ENCODE measurements at regions of chr2 and their contacts with region 1.

Region 1: GRCh38 chr2:20617892-20618467 is 32.9 kb downstream of the HS1BP3 start:
- DNase-seq: peak; percentile 99
- H3K4me3 Mint-ChIP-seq: peak overlapping the region; percentile 31
- H3K27ac Mint-ChIP-seq: peak overlapping the region; percentile 78
- H3K4me1 Mint-ChIP-seq: peaks cover 33% of the 10 kb centered on the region
- H3K27me3 Mint-ChIP-seq: no peaks in the 10 kb centered on the region
- CTCF ChIP-seq: peak; percentile 18

Region 2: DNA sequence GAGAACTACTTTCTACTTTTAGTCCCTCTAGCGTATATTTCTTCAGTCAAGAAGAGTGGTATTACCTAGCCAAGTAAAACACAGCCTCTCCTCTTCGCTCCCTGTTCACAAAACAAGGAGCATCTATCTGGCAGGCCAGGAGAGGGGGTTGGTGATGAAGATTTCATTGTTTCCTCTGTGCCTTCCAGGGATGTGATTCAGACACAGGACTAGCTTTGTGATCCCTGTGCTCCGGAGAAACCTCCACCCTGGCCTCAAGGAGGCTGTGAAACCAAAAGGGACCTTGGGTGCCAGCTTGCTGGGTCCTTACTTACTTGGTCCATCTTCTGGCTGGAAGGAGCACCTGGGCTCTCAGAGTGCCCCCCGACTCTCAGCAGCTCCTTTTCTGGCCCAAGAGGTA is 165.4 kb before region 1 on chr2:
- CTCF ChIA-PET with region 1: interaction called, 3 read pairs
- POLR2A ChIA-PET with region 1: no interaction called
- intact Hi-C with region 1: loop called (anchors 1 kb)
- DNase-seq: peak; percentile 91
- H3K4me3 Mint-ChIP-seq: no peak overlapping the region
- H3K27ac Mint-ChIP-seq: no peak overlapping the region
- H3K4me1 Mint-ChIP-seq: no peaks in the 10 kb centered on the region
- H3K27me3 Mint-ChIP-seq: no peaks in the 10 kb centered on the region
- CTCF ChIP-seq: peak; percentile 52

Region 3: GRCh38 chr2:20490260-20491181 is 127.5 kb before region 1 on chr2:
- CTCF ChIA-PET with region 1: no interaction called
- POLR2A ChIA-PET with region 1: no interaction called
- intact Hi-C with region 1: no loop called
- DNase-seq: peak; percentile 93
- H3K4me3 Mint-ChIP-seq: no peak overlapping the region
- H3K27ac Mint-ChIP-seq: no peak overlapping the region
- H3K4me1 Mint-ChIP-seq: no peaks in the 10 kb centered on the region
- H3K27me3 Mint-ChIP-seq: no peaks in the 10 kb centered on the region
- CTCF ChIP-seq: no peak

Region 4: DNA sequence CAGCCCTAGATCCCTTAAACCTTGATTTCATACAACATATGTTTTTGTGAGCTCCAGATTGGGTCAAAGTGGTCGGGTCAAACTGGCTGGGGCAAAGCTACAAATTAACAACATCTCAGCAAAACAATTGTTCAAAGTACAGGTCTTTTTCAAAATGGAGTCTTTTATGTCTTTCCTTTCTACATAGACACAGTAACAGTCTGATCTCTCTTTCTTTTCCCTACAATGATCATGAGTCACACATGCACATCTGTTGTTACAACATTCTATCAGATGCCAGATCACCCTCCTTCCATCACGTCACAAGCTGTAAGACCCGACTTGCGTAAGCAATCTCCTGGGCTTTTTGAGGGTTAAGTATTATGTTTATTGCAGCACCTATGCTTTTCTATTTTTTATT is 116.0 kb before region 1 on chr2:
- CTCF ChIA-PET with region 1: no interaction called
- POLR2A ChIA-PET with region 1: interaction called, 4 read pairs
- intact Hi-C with region 1: loop called (anchors 5 kb)
- DNase-seq: peak; percentile 98
- H3K4me3 Mint-ChIP-seq: no peak overlapping the region
- H3K27ac Mint-ChIP-seq: peak overlapping the region; percentile 98
- H3K4me1 Mint-ChIP-seq: peaks cover 45% of the 10 kb centered on the region
- H3K27me3 Mint-ChIP-seq: no peaks in the 10 kb centered on the region
- CTCF ChIP-seq: no peak

Region 5: GRCh38 chr2:20600756-20601325 is 17.1 kb before region 1 on chr2:
- CTCF ChIA-PET with region 1: interaction called, 10 read pairs
- POLR2A ChIA-PET with region 1: interaction called, 14 read pairs
- intact Hi-C with region 1: no loop called
- DNase-seq: no peak
- H3K4me3 Mint-ChIP-seq: no peak overlapping the region
- H3K27ac Mint-ChIP-seq: no peak overlapping the region
- H3K4me1 Mint-ChIP-seq: peaks cover 24% of the 10 kb centered on the region
- H3K27me3 Mint-ChIP-seq: no peaks in the 10 kb centered on the region
- CTCF ChIP-seq: peak; percentile 30

Region 6: DNA sequence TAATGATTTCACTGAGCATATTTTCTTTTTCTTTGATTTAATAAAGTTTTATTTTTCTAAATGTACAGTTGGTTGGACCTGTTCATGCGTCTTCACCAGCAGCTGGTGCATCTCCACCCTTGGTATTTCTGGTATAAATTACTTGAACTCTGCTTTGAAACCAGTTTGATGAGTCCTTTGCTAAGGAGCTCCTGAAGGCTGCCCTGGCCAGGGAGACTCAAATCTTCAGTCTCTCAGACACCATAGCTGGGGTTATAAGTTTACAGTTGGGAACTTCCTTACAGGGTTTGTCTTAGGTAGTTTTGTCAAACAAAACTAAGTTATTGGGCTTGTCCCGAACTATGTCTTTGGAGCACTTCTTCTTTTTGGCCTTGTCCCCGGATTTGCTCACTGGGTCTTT is 11.8 kb before region 1 on chr2:
- CTCF ChIA-PET with region 1: interaction called, 10 read pairs
- POLR2A ChIA-PET with region 1: interaction called, 14 read pairs
- intact Hi-C with region 1: no loop called
- DNase-seq: no peak
- H3K4me3 Mint-ChIP-seq: no peak overlapping the region
- H3K27ac Mint-ChIP-seq: no peak overlapping the region
- H3K4me1 Mint-ChIP-seq: peaks cover 18% of the 10 kb centered on the region
- H3K27me3 Mint-ChIP-seq: no peaks in the 10 kb centered on the region
- CTCF ChIP-seq: no peak